ENCODE measurements at regions of chr1 and their contacts with region 1.

Region 1: GRCh38 chr1:220803401-220804201 is 16.9 kb downstream of the MTARC1 start:
- DNase-seq: peak in 4 of 14 experiments; percentile 10 to 43 (median 18)
- ATAC-seq: no peak
- H3K4me3 ChIP-seq: no peak overlapping the region
- H3K4me3 Mint-ChIP-seq: no peak overlapping the region
- H3K27ac ChIP-seq: no peak overlapping the region
- H3K27ac Mint-ChIP-seq: no peak overlapping the region
- H3K4me1 ChIP-seq: no peaks in the 10 kb centered on the region
- H3K4me1 Mint-ChIP-seq: no peaks in the 10 kb centered on the region
- H3K27me3 ChIP-seq: peaks cover 3 to 6% of the 10 kb centered on the region in 2 experiments
- H3K27me3 Mint-ChIP-seq: peaks cover 28% of the 10 kb centered on the region
- CTCF ChIP-seq: peak; percentile 72

Region 2: GRCh38 chr1:221203224-221204054 is 399.8 kb after region 1 on chr1:
- CTCF ChIA-PET with region 1: no interaction called
- POLR2A ChIA-PET with region 1: no interaction called
- intact Hi-C with region 1: loop called in 1 of 2 experiments (anchors 10 kb)
- DNase-seq: peak; percentile 18 to 69 (median 43)
- ATAC-seq: no peak
- H3K4me3 ChIP-seq: no peak overlapping the region
- H3K4me3 Mint-ChIP-seq: no peak overlapping the region
- H3K27ac ChIP-seq: no peak overlapping the region
- H3K27ac Mint-ChIP-seq: no peak overlapping the region
- H3K4me1 ChIP-seq: no peaks in the 10 kb centered on the region
- H3K4me1 Mint-ChIP-seq: no peaks in the 10 kb centered on the region
- H3K27me3 ChIP-seq: no peaks in the 10 kb centered on the region
- H3K27me3 Mint-ChIP-seq: peaks cover 8% of the 10 kb centered on the region
- CTCF ChIP-seq: peak; percentile 71

Measured in CD4-positive, alpha-beta T cell (primary cell).